GM10248 (cell line): ENCODE measurements at regions of chr19 and their contacts with region 1.

Region 1: DNA sequence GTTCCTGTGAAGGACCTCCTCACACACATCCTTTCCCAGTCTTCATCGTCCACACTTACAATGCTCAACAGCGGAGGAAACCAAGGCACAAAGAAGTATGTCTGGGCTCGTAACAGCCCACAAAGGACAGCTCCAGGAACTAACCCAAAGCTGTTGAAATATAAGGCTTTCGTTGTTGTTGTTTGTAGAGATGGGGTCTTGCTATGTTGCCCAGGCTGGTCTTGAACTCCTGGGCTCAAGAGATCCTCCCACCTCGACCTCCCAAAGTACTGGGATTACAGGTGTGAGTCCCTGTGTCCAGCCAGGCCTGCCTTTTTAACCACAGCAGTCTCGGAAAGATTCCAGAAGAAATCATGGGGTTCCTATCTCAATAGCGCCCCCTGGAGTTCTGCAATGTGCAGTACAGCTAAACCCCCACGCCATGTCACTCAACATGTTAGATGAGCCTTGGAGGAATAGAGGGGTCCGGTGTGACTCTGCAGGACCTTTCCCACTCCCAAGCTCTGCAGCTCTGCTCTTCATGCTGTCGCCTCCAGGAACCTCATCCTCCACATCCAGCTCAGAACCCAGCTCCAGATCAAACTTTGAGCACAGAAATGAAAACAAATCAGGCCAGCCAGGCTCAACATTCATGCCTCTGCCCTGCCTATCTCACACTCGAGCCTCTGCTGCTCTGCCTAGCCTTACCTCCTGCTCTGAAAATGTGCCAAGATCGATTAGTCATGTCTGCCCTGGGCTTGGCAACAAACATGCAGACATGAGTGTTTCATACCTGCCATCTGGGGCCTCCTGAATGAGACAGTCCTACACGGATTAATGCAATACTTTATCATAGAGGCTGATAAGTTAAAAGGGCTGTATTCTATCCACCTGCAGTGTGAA is 7.5 kb downstream of the PLA2G4C start:
- DNase-seq: no peak
- CTCF ChIP-seq: peak; percentile 56

Region 2: DNA sequence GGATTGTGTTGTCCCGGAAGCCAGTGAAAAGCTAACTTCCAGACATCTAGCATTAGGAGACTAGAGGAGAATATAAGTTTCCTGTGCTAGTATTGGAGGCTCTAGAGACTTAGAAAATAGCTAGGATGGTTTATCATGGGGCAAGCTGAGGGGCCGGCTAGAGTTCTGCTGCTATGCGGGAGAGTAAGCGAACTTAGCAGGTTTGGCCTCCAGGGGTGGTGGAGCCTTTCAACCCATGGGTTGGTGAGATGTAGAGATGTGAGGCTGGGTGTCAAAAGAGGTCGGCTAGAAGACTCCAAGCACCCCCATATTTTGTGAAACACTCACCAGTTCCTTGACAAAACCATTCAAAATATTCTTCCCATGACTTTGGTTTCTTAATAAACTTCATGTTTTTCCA is 221.4 kb before region 1 on chr19:
- CTCF ChIA-PET with region 1: no interaction called
- POLR2A ChIA-PET with region 1: interaction called, 10 read pairs
- DNase-seq: no peak
- CTCF ChIP-seq: no peak

Region 3: GRCh38 chr19:48152551-48152950 is 49.4 kb after region 1 on chr19:
- CTCF ChIA-PET with region 1: interaction called, 88 read pairs
- POLR2A ChIA-PET with region 1: no interaction called
- DNase-seq: peak; percentile 72
- CTCF ChIP-seq: peak; percentile 82

Region 4: DNA sequence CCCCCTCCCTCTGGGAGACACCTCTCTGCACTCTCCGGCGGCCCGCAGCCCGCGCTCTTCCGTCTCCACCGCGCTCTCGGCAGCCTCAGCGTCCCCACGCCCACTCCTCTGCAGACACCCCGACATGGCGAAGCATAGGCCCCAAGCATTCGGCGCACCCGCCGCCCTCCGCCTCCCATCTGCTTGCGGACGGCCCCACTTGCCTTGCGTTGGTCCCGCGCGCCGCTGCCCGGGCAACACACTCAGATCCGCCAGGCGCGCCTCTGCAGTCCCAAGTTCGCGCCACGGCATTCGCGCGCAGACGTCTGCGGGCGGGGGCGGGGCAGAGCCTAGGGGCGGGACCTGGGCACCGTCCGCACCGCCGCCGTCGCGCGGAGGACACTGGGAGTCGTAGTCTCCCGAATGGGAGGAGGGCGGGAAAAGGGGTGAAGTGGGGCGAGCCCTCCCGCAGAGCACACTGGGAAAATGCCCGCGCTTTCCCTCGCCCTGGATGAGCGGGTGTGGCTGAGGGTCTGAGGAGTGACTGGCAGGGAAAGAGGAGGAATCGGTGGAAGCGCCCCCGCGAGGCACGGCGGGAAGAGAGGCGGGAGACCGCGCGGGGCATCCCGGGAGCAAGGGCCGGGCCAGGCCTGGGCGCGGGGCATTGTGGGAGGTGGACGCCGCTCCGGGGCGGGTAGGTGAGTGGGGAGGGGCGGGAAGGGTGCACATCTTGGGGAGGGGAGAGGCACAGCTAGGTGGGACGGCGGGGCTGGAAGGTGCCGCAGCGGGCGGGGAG is 67.1 kb after region 1 on chr19 and contains the starts of genes LIG1 and ZSWIM9:
- CTCF ChIA-PET with region 1: no interaction called
- POLR2A ChIA-PET with region 1: no interaction called
- DNase-seq: peak; percentile 95
- CTCF ChIP-seq: no peak